ENCODE measurements at regions of chr9 and their contacts with region 1.

Region 1: GRCh38 chr9:100700689-100701318 is 122.9 kb downstream of the CAVIN4 start:
- DNase-seq: peak in 1 of 35 experiments; percentile 6
- ATAC-seq: no peak
- H3K4me3 ChIP-seq: no peak overlapping the region
- H3K4me3 Mint-ChIP-seq: no peak overlapping the region
- H3K27ac ChIP-seq: no peak overlapping the region
- H3K27ac Mint-ChIP-seq: no peak overlapping the region
- H3K4me1 ChIP-seq: no peaks in the 10 kb centered on the region
- H3K4me1 Mint-ChIP-seq: no peaks in the 10 kb centered on the region
- H3K27me3 ChIP-seq: no peaks in the 10 kb centered on the region
- H3K27me3 Mint-ChIP-seq: no peaks in the 10 kb centered on the region

Region 2: DNA sequence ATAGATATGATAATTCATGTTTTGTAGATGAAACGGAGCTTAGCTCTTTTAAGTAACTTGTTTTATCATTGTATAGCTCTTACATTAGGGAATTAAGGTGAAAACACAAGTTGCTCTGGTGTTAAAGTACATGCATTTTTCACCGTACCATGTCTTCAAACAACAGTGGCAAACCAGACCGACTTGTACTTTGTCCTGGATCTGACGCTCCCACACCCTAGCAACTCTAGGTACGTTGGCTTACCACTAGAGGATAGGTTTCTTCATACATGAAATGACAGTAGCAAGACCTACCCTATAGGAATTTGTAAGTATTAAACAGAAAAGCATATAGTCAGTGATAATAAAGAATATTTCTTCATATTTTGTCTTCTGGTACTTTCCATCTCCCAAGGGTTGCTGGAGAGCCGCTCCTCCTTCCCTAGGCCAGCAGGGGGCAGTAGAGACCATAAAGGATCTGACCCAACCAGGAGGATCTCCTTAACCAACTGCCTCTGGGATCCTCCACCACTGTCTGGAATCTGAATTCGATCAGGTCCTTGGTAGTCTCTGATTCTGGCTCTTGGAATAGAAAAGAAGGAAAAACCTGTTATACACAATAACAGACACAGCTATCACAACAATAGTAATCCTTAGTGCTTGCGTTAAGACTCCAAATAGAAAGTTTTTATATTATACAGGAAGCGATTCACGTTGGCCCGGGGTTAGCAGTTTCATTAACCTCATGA is 13.7 kb after region 1 on chr9:
- CTCF ChIA-PET with region 1: no interaction called
- POLR2A ChIA-PET with region 1: interaction called in 1 of 2 experiments, 11 read pairs
- DNase-seq: peak in 15 of 35 experiments; percentile 3 to 40 (median 7)
- ATAC-seq: no peak
- H3K4me3 ChIP-seq: no peak overlapping the region
- H3K4me3 Mint-ChIP-seq: no peak overlapping the region
- H3K27ac ChIP-seq: no peak overlapping the region
- H3K27ac Mint-ChIP-seq: no peak overlapping the region
- H3K4me1 ChIP-seq: no peaks in the 10 kb centered on the region
- H3K4me1 Mint-ChIP-seq: no peaks in the 10 kb centered on the region
- H3K27me3 ChIP-seq: peaks cover 0 to 8% of the 10 kb centered on the region in 2 experiments
- H3K27me3 Mint-ChIP-seq: peaks cover 0 to 27% of the 10 kb centered on the region in 2 donors